Naive thymus-derived CD4-positive, alpha-beta T cell (primary cell): ENCODE measurements at regions of chr7 and their contacts with region 1.

Region 1: DNA sequence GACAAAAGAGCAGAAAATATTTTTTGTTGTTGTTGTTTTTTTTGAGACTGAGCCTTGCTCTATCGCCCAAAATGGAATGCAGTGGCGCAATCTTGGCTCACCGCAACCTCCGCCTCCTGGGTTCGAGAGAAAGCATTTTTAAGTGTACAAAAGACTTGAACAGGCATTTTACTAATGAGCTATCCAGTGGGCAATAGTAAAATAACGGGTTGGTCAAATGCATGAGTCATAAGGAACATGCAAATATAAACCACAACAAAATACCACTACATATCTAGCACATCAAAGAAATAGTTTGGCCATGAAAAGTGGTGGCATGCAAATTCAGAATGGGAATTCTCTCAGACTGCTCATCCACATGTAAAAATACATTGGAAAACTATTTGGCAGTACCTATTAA is 71.7 kb upstream of the TMEM106B start:
- DNase-seq: no peak
- ATAC-seq: no peak
- H3K4me3 ChIP-seq: no peak overlapping the region
- H3K4me3 Mint-ChIP-seq: no peak overlapping the region
- H3K27ac ChIP-seq: no peak overlapping the region
- H3K27ac Mint-ChIP-seq: no peak overlapping the region
- H3K4me1 ChIP-seq: no peaks in the 10 kb centered on the region
- H3K4me1 Mint-ChIP-seq: peaks cover 0 to 12% (median 6%) of the 10 kb centered on the region in 7 donors
- H3K27me3 ChIP-seq: no peaks in the 10 kb centered on the region
- H3K27me3 Mint-ChIP-seq: peaks cover 0 to 8% (median 0%) of the 10 kb centered on the region in 5 donors

Region 2: DNA sequence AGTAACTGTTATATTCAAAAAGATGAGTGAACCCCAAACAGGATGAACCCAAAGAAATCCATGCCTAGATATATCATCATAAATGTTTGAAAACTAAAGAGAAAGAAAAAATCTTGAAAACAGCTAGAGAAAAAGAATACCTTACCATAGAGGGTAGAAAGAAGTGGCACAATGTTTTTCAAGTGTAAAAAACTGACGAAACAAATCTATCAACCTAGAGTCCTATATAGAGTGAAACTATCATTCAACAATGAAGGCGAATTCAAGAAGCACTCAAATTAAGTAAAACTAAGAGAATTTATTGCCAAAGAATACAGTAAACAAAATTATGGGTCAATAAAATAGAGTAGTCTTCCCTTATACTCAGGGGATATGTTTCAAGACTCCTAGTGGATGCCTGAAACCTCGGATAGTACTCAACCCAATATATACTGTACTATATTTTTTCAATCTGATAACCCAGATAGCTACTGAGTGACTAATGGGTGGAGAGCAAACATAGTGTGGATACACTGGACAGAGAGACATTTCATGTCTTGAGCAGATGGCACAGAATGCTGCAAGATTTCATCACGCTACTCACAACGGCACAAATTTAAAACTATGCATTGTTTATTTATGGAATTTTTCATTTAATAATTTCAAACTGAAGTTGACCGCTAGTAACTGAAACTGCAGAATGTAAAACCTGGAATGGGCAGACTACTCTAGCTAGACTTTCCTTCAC is 19.1 kb after region 1 on chr7:
- CTCF ChIA-PET with region 1: interaction called, 3 read pairs
- POLR2A ChIA-PET with region 1: no interaction called
- intact Hi-C with region 1: loop called in 1 of 2 experiments (anchors 2 kb)
- DNase-seq: no peak
- ATAC-seq: no peak
- H3K4me3 ChIP-seq: no peak overlapping the region
- H3K4me3 Mint-ChIP-seq: no peak overlapping the region
- H3K27ac ChIP-seq: no peak overlapping the region
- H3K27ac Mint-ChIP-seq: no peak overlapping the region
- H3K4me1 ChIP-seq: no peaks in the 10 kb centered on the region
- H3K4me1 Mint-ChIP-seq: peaks cover 3 to 8% (median 7%) of the 10 kb centered on the region in 7 donors
- H3K27me3 ChIP-seq: no peaks in the 10 kb centered on the region
- H3K27me3 Mint-ChIP-seq: peaks cover 0 to 7% (median 7%) of the 10 kb centered on the region in 5 donors